Heart right ventricle (tissue), 16 donors: ENCODE measurements at regions of chr6 and their contacts with region 1.

Region 1: GRCh38 chr6:166394036-166394892 is 11.5 kb upstream of the MPC1 start:
- DNase-seq: no peak
- ATAC-seq: no peak
- H3K4me3 ChIP-seq: no peak overlapping the region
- H3K27ac ChIP-seq: no peak overlapping the region
- H3K4me1 ChIP-seq: no peaks in the 10 kb centered on the region
- H3K27me3 ChIP-seq: peaks cover 0 to 33% (median 9%) of the 10 kb centered on the region in 7 donors
- CTCF ChIP-seq: no peak

Region 2: DNA sequence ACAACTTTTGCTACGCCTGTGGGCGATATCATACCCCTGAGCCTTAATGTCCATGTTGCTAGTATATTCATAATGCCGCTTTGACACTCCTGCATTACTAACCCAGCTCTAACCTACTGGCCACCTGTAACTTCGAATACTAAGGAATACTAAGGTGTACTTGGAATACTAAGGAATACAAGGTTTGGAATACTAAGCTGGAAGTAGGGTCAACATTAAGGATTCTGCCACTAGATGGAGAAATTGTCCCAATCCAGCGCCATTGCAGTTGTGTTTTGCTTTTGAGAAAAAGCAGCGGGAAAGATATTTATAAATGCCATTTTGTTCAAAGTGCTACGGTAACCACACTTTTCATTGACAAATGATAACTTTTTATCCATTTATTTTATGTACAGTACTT is 237.3 kb before region 1 on chr6:
- intact Hi-C with region 1: loop called in 1 of 10 experiments (anchors 10 kb)
- DNase-seq: no peak
- ATAC-seq: no peak
- H3K4me3 ChIP-seq: no peak overlapping the region
- H3K27ac ChIP-seq: no peak overlapping the region
- H3K4me1 ChIP-seq: no peaks in the 10 kb centered on the region
- H3K27me3 ChIP-seq: peaks cover 0 to 46% (median 17%) of the 10 kb centered on the region in 7 donors
- CTCF ChIP-seq: peak in 6 of 9 donors; percentile 34 to 55 (median 42)

Region 3: DNA sequence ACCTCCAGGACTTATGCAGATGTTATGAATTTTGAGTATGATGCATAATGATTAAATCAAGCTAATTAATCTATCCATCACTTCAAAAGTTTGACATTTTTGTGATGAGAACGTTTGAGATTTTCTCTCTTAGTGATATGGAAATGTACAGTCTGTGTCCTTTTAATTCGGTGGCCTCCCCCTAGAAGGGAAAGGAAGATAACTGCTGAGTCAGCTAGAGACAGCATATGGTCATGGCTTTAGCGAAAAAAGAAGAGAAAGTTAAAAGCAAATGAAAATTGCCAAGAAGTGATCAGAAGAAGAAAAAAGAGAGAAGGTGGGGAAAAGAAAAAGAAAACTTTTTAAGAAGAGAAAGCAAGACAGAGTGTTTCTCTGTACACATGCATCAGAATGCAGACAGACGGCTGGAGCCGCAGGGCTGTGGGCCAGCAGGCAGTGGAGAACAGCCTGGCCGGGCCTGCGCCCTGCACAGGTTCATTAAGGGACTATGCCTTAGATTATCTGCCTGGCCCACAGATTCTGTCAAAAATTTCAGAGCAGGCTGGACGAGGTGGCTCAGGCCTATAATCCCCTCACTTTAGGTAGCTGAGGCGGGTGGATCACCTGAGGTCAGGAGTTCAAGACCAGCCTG is 93.8 kb before region 1 on chr6:
- intact Hi-C with region 1: no loop called
- DNase-seq: no peak
- ATAC-seq: no peak
- H3K4me3 ChIP-seq: no peak overlapping the region
- H3K27ac ChIP-seq: no peak overlapping the region
- H3K4me1 ChIP-seq: no peaks in the 10 kb centered on the region
- H3K27me3 ChIP-seq: peaks cover 0 to 74% (median 36%) of the 10 kb centered on the region in 7 donors
- CTCF ChIP-seq: no peak

Region 4: DNA sequence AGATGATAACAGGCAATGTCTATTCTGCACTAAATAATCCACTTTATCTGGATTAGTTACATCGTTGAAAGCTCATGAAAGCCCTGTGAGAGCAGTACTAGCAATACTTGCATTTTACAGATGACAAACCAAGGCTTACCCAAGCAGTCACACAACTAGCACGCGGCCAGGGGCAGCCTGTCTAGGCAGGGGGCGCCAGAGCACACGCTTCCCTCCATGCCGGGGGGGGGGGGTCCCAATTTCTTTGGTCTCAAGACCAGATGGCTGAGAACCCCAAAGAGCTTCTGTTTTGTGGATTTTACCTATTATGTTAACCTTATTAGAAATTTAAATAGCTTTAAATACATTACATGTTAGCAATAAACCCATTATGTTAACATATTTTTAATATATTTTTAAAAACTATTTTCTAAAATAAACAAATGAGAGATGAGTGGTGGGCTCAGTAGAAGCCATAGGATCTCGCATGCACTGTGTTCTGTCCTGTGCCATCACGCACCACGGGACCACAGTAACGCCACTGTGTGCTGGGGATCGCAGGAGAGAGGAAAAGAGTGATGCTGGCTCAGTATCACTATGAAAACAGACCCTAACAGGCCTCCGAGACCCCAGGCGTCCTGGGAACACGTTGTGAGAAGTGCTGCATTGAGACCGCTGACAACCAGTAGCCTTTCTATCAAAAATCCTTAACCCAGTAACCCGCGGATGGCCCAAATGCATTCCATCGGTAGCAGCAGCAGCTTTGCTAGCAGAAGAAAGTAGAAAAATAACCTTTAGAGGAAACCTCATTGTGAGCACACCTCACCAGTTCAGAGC is 80.8 kb before region 1 on chr6:
- intact Hi-C with region 1: loop called in 3 of 10 experiments (anchors 5 to 10 kb)
- DNase-seq: no peak
- ATAC-seq: peak; percentile 58 to 91 (median 66)
- H3K4me3 ChIP-seq: no peak overlapping the region
- H3K27ac ChIP-seq: no peak overlapping the region
- H3K4me1 ChIP-seq: peaks cover 0 to 4% (median 2%) of the 10 kb centered on the region in 9 donors
- H3K27me3 ChIP-seq: peaks cover 0 to 22% (median 12%) of the 10 kb centered on the region in 7 donors
- CTCF ChIP-seq: peak; percentile 49 to 83 (median 67)

Region 5: GRCh38 chr6:166351715-166352285 is 42.5 kb before region 1 on chr6:
- intact Hi-C with region 1: no loop called
- DNase-seq: peak in 1 of 2 donors; percentile 19
- ATAC-seq: peak in 7 of 8 donors; percentile 34 to 75 (median 73)
- H3K4me3 ChIP-seq: no peak overlapping the region
- H3K27ac ChIP-seq: peak overlapping the region in 3 of 10 donors; percentile 0 to 35 (median 3)
- H3K4me1 ChIP-seq: peaks cover 0 to 5% (median 0%) of the 10 kb centered on the region in 9 donors
- H3K27me3 ChIP-seq: peaks cover 0 to 5% (median 0%) of the 10 kb centered on the region in 7 donors
- CTCF ChIP-seq: no peak

Region 6: DNA sequence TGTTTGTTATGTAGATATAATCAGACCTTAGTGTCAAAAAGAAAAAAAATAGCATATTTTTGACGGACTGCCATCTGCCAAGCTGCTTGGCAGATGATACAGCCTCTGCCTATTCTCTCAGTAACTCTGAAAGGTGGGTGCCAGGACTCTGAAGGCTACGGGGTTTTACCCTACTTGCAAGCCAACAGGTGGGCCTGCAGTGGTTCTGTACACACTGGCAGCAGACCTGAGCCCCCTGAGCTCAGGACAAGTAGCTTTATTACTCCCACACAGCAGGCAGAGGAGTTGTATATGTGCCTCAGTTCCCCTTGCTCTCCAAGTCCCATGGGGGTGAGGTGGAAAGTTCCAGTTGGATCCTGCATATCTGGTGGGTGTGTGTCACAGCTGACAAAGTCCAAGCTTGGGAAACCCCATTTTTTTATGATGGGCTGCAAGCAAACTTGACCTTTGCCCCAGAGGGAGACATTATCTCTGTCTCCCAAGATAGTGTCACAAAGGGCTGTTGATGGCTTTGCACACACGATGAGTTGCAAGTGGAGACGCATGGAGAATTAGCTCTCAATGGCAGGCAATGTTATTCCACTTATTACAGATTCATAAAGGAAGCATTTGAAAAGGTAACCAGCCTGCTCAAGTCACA is 1411.9 kb after region 1 on chr6:
- intact Hi-C with region 1: no loop called
- DNase-seq: no peak
- ATAC-seq: no peak
- H3K4me3 ChIP-seq: no peak overlapping the region
- H3K27ac ChIP-seq: no peak overlapping the region
- H3K4me1 ChIP-seq: no peaks in the 10 kb centered on the region
- H3K27me3 ChIP-seq: peaks cover 0 to 13% (median 0%) of the 10 kb centered on the region in 7 donors
- CTCF ChIP-seq: no peak